ENCODE measurements at regions of chr11 and their contacts with region 1.

Region 1: DNA sequence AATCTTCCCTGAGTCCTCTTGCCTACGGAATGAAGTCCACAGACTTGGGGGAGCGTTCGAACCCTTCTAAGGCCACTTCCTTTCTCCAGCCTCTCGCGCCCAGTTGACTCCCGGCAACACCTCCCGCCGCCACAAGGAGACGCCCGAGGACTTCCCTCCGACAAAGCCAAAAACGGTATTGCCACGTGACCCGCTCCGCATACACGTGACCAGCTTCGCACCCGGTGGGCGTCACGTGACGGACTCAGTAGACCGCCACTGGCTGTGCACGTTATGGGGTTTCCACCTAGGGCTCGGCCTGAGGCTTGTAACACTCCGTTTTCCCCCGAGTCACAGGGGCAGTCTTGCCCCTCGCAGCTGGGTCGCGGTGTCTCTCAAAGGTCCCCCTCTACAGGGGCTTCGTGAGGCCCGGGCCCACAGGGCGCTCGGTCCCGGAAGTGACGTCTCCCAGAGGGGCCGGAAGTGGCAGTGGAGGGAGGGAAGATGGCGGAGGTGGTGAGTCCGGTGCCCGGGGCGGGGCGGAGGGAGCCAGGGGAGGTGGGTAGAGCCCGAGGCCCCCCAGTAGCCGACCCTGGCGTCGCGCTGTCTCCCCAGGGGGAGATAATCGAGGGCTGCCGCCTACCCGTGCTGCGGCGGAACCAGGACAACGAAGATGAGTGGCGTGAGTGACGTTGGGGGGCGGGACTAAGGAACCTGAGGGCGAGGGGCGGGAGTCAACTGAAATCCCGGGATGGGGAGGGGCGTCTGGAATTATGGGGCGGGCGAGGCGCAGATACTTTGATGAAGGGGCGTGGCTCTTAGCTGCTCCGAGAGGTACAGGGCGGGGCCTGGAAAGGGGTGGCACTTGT is at the start of gene KAT5:
- DNase-seq: peak; percentile 99
- H3K4me3 Mint-ChIP-seq: peak within 1 kb of the TSS; percentile 82
- H3K27ac Mint-ChIP-seq: peak within 1 kb of the TSS; percentile 97
- H3K4me1 Mint-ChIP-seq: peaks cover 35% of the 10 kb centered on the region
- H3K27me3 Mint-ChIP-seq: no peaks in the 10 kb centered on the region
- total RNA-seq, gene KAT5: 60.8 to 72.3 TPM

Region 2: GRCh38 chr11:65727865-65728264 is 15.9 kb after region 1 on chr11:
- CTCF ChIA-PET with region 1: interaction called, 36 read pairs
- POLR2A ChIA-PET with region 1: no interaction called
- DNase-seq: no peak
- H3K4me3 Mint-ChIP-seq: no peak overlapping the region
- H3K27ac Mint-ChIP-seq: no peak overlapping the region
- H3K4me1 Mint-ChIP-seq: no peaks in the 10 kb centered on the region
- H3K27me3 Mint-ChIP-seq: peaks cover 14% of the 10 kb centered on the region

Region 3: DNA sequence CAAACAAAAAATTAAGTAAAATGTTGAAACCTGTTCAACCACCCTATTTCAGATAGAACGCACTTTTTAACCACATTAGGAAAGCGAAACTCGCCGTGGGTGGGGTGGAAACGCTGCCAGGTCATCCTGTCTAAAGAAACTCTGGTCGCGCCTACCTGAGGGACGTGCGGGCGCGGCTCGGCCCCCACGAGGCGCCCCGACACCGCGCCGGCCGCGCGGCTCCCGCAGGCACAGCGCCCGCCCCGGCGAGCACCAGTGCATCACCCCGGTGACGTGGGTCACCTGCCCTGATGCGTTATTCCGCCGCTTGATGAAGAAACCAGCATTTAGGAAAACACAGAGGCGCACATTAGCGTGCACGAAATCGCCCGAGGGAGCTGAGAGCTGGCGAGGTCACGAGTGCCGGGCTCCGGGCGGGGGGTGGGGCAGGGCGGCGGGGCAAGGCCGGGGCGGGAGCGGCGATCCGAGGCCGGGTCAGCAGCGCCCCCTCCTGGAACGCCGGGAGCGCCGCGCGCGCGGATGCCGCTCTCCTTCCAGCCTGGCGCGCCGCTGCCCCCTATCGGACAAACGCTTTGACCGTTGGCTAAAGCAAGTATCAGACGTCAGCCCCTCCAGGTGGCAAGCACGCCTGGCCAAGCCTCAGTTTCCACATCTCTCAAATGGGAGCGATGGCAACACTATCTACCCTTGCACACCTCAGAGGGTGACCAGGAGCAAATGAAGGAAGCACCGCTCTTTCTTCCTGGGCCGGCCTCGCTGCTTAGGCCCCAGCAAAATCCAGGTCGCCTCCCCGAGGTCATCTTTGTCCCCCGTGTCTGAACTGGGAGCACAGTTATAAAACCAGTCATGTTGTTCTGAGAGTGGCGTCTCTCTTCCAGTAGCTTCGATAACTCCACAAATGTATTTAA is 106.1 kb after region 1 on chr11:
- CTCF ChIA-PET with region 1: interaction called, 46 read pairs
- POLR2A ChIA-PET with region 1: no interaction called
- DNase-seq: peak; percentile 93
- H3K4me3 Mint-ChIP-seq: peak overlapping the region; percentile 74
- H3K27ac Mint-ChIP-seq: peak overlapping the region; percentile 79
- H3K4me1 Mint-ChIP-seq: peaks cover 20% of the 10 kb centered on the region
- H3K27me3 Mint-ChIP-seq: peaks cover 4% of the 10 kb centered on the region

Region 4: GRCh38 chr11:65850831-65851811 is 139.1 kb after region 1 on chr11:
- CTCF ChIA-PET with region 1: interaction called, 11 read pairs
- POLR2A ChIA-PET with region 1: no interaction called
- DNase-seq: no peak
- H3K4me3 Mint-ChIP-seq: no peak overlapping the region
- H3K27ac Mint-ChIP-seq: peak overlapping the region; percentile 55
- H3K4me1 Mint-ChIP-seq: peaks cover 26% of the 10 kb centered on the region
- H3K27me3 Mint-ChIP-seq: no peaks in the 10 kb centered on the region